Calu3 (cell line): ENCODE measurements at regions of chr9 and their contacts with region 1.

Region 1: GRCh38 chr9:133144137-133144903 is 19.4 kb downstream of the GBGT1 start:
- DNase-seq: peak; percentile 81
- H3K4me3 Mint-ChIP-seq: peak overlapping the region; percentile 47
- H3K27ac Mint-ChIP-seq: no peak overlapping the region
- H3K4me1 Mint-ChIP-seq: no peaks in the 10 kb centered on the region
- H3K27me3 Mint-ChIP-seq: no peaks in the 10 kb centered on the region
- CTCF ChIP-seq: peak; percentile 91

Region 2: GRCh38 chr9:132944302-132945185 is 199.8 kb before region 1 on chr9 and contains the start of gene TSC1:
- CTCF ChIA-PET with region 1: no interaction called
- intact Hi-C with region 1: no loop called
- DNase-seq: peak; percentile 94
- H3K4me3 Mint-ChIP-seq: peak within 1 kb of the TSS; percentile 78
- H3K27ac Mint-ChIP-seq: peak within 1 kb of the TSS; percentile 94
- H3K4me1 Mint-ChIP-seq: peaks cover 6% of the 10 kb centered on the region
- H3K27me3 Mint-ChIP-seq: no peaks in the 10 kb centered on the region
- CTCF ChIP-seq: no peak
- total RNA-seq, gene TSC1: 31.7 and 35.9 TPM in 2 replicates

Region 3: DNA sequence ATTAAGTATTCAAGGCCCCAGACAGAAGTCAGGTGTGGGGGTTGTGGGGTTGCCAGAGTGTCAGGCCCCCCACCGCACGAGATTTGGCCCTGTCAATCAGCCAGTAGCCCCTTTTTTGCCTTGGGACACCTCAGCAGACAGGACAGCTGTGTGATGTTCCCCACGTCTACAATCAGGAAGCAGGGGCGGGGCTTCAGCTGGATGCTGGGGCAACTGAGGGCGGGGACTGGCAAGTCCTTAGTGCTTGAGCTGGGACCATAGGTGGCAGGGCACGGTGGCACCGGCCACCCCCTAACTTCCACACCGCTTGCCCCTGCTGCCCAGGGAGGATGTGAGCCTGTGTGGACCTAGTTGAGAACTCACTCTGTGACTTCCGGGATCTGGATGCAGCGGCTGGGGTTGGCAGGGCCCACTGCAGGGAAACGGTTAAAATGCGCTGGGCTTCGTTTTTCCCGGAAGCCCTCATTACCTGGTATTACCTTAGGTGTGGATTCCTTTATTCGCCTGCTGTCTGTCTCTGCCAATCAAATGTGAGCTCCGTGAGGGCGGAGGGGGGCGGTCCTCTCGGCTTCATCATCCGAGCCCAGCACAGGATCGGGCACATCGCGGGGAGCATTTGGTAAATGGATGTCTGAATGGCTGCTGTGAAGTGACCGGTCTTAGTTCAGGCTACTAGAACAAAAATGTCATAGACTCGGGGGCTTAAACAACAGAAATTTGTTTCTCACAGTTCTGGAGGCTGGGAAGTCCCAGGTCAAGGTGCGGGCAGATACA is 121.0 kb before region 1 on chr9:
- CTCF ChIA-PET with region 1: no interaction called
- intact Hi-C with region 1: no loop called
- DNase-seq: no peak
- H3K4me3 Mint-ChIP-seq: no peak overlapping the region
- H3K27ac Mint-ChIP-seq: no peak overlapping the region
- H3K4me1 Mint-ChIP-seq: no peaks in the 10 kb centered on the region
- H3K27me3 Mint-ChIP-seq: no peaks in the 10 kb centered on the region
- CTCF ChIP-seq: no peak

Region 4: GRCh38 chr9:133103183-133103986 is 40.9 kb before region 1 on chr9:
- CTCF ChIA-PET with region 1: interaction called, 36 read pairs
- intact Hi-C with region 1: loop called (anchors 1 kb)
- DNase-seq: peak; percentile 74
- H3K4me3 Mint-ChIP-seq: no peak overlapping the region
- H3K27ac Mint-ChIP-seq: no peak overlapping the region
- H3K4me1 Mint-ChIP-seq: no peaks in the 10 kb centered on the region
- H3K27me3 Mint-ChIP-seq: no peaks in the 10 kb centered on the region
- CTCF ChIP-seq: peak; percentile 89

Region 5: DNA sequence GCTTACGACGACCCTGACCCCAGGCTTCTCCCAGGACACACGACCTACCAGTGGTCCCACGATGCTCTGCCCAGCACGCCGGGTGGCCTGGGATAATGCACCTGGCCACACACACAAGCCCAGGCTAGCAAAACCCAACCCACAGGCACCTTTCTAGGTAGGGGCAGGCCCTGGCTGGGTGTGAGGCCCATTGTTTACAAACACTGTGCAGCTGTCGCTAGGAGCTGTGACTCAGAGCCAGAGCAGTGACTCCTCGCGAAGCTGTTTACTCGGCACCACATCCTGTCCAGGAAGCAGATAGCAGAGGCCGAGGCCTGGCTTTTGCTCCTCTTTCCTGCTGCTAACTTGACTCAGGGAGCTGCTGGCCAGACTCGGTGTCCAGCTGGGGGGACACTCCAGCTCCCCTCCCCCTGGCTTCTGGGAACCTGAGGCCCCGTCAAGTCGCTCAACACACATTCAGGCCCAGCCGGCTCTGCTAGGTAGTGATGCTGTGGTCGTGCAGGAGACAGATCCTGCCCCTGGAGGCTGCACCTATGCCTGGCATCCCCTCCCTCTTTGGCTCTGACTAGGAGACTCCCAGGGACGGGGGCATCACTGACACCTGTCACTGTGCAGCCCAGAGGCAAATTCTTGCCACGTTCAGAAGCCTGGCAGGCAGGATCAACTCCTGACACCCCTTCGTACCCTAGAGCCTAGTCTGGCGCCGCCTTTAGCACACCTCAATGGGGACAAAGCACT is 10.5 kb before region 1 on chr9:
- CTCF ChIA-PET with region 1: interaction called, 40 read pairs
- intact Hi-C with region 1: no loop called
- DNase-seq: peak; percentile 91
- H3K4me3 Mint-ChIP-seq: peak overlapping the region; percentile 34
- H3K27ac Mint-ChIP-seq: peak overlapping the region; percentile 93
- H3K4me1 Mint-ChIP-seq: peaks cover 26% of the 10 kb centered on the region
- H3K27me3 Mint-ChIP-seq: no peaks in the 10 kb centered on the region
- CTCF ChIP-seq: no peak